Activated CD8-positive, alpha-beta T cell treated with anti-CD3 and anti-CD28 coated beads for 36 hours (primary cell): ENCODE measurements at regions of chr16 and their contacts with region 1.

Region 1: DNA sequence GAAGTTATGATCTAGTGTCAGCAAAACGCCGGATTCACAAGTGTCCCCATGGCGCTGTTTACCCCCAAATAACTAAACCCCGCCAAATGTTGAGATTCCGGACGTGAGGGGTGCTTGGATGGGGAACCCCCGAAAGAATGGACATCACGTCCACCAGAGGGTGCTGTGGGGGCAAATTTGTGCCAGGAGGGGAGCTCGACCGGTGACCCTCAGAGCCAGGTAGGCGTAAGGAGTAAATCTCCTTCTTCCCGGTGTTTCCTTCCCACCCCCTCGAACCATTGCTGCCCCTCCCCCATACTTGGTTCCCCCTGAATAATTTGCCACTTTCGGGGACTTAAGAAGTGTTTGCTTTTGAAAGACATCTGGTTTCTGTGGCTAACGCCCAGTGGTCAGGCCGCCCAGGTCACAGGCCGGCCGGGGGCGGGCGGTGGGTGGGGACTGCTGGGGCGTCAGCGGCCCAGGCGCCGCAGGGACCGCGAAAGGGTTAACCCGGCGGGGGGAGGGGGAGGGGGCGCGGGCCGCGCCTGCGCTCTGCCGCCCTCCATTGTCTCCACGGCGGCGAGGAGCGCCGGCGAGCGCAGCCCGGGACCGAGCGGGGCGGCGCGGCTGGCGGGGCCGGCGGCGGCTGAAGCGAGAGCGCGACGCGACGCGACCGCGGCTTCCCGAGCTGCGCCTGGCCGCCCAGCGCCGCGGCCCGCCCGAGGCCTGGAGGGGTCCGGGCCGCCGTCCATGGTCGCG is at the start of gene ZNRF1:
- DNase-seq: peak; percentile 92
- ATAC-seq: peak; percentile 86
- H3K4me3 Mint-ChIP-seq: peak within 1 kb of the TSS; percentile 77
- H3K27ac Mint-ChIP-seq: peak within 1 kb of the TSS; percentile 65
- H3K4me1 Mint-ChIP-seq: peaks cover 18% of the 10 kb centered on the region
- H3K27me3 Mint-ChIP-seq: peaks cover 10% of the 10 kb centered on the region
- CTCF ChIP-seq: peak; percentile 80
- total RNA-seq, gene ZNRF1: 11.0 to 13.7 TPM

Region 2: GRCh38 chr16:74984535-74985296 is 13.9 kb before region 1 on chr16 and contains the start of gene WDR59:
- CTCF ChIA-PET with region 1: interaction called, 33 read pairs
- POLR2A ChIA-PET with region 1: interaction called, 7 read pairs
- intact Hi-C with region 1: loop called (anchors 2 kb)
- DNase-seq: peak; percentile 100
- ATAC-seq: peak; percentile 99
- H3K4me3 Mint-ChIP-seq: peak within 1 kb of the TSS; percentile 86
- H3K27ac Mint-ChIP-seq: peak within 1 kb of the TSS; percentile 91
- H3K4me1 Mint-ChIP-seq: peaks cover 21% of the 10 kb centered on the region
- H3K27me3 Mint-ChIP-seq: no peaks in the 10 kb centered on the region
- CTCF ChIP-seq: no peak
- total RNA-seq, gene WDR59: 59.1 to 68.1 TPM

Region 3: DNA sequence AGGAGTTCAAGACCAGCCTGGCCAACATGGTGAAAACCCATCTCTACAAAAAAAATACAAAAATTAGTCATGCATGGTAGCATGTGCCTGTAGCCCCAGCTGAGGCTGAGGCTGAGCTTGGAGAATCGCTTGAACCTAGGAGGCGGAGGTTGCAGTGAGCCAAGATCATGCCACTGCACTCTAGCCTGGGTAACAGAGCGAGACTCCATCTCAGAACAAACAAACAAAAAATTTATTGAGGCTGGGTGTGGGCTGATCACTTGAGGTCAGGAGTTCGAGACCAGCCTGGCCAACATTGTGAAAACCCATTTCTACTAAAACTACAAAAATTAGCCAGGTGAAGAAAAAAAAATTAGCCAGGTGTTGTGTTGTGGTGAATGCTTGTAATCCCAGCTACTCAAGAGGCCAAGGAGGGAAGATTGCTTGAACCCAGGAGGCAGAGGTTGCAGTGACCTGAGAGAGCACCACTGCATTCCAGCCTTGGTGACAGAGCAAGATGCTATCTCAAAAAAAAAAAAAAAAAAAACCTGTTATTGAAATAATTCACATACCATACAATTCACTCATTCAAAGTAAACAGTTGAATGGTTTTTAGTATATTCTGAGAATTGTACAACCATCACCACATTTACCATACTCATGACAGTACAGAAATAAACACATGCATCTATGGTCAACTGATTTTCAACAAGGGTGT is 31.1 kb after region 1 on chr16:
- CTCF ChIA-PET with region 1: no interaction called
- POLR2A ChIA-PET with region 1: no interaction called
- intact Hi-C with region 1: no loop called
- DNase-seq: no peak
- ATAC-seq: no peak
- H3K4me3 Mint-ChIP-seq: no peak overlapping the region
- H3K27ac Mint-ChIP-seq: no peak overlapping the region
- H3K4me1 Mint-ChIP-seq: peaks cover 7% of the 10 kb centered on the region
- H3K27me3 Mint-ChIP-seq: no peaks in the 10 kb centered on the region
- CTCF ChIP-seq: no peak

Region 4: GRCh38 chr16:75053791-75054555 is 55.3 kb after region 1 on chr16:
- CTCF ChIA-PET with region 1: no interaction called
- POLR2A ChIA-PET with region 1: no interaction called
- intact Hi-C with region 1: no loop called
- DNase-seq: no peak
- ATAC-seq: no peak
- H3K4me3 Mint-ChIP-seq: no peak overlapping the region
- H3K27ac Mint-ChIP-seq: no peak overlapping the region
- H3K4me1 Mint-ChIP-seq: peaks cover 4% of the 10 kb centered on the region
- H3K27me3 Mint-ChIP-seq: no peaks in the 10 kb centered on the region
- CTCF ChIP-seq: no peak

Region 5: GRCh38 chr16:75099756-75100602 is 101.3 kb after region 1 on chr16:
- CTCF ChIA-PET with region 1: interaction called, 12 read pairs
- POLR2A ChIA-PET with region 1: no interaction called
- intact Hi-C with region 1: no loop called
- DNase-seq: peak; percentile 72
- ATAC-seq: peak; percentile 52
- H3K4me3 Mint-ChIP-seq: peak overlapping the region; percentile 24
- H3K27ac Mint-ChIP-seq: peak overlapping the region; percentile 92
- H3K4me1 Mint-ChIP-seq: peaks cover 54% of the 10 kb centered on the region
- H3K27me3 Mint-ChIP-seq: no peaks in the 10 kb centered on the region
- CTCF ChIP-seq: no peak